ENCODE measurements at regions of chr4 and their contacts with region 1.

Region 1: DNA sequence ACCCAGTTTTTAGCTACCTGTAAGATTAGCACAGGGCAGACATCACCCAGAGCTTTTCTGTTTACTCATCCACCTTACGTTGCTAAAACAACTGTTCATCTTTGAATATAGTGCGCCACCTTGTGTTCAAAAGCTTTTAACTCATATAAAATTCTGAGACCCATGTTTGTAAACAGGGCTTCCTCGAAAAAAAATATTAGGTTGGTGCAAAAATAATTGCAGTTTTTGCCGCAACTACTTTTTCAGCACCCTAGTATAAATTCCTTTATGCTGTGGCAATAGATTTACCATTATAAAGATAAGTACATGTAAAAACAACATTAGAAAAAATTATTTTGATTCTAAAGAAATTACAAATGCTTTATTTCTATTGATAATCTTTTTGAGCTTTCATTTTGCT is 147.9 kb downstream of the LRBA start:
- DNase-seq: no peak
- H3K4me3 ChIP-seq: no peak overlapping the region
- H3K27ac ChIP-seq: no peak overlapping the region
- H3K4me1 ChIP-seq: no peaks in the 10 kb centered on the region
- H3K27me3 ChIP-seq: no peaks in the 10 kb centered on the region
- CTCF ChIP-seq: peak; percentile 49 to 73 (median 60)

Region 2: DNA sequence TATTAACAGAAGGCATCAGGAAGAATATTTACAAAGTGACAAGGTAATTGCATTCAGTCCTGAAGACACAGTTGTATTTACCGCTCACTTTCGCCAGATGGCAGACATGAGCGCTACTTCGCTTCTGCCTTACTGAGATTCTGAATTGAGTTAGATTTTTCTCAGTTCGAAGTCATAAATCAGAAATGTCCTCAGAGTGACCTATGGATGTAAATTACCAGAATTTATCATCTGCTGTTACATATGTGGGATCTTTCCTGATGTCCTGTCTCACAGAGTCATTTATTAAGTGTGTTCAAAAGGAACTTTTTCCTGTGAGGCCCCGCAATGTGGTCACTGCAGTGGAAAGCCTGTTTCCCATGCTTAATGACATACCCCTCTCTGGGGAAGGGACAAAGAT is 886.2 kb before region 1 on chr4:
- intact Hi-C with region 1: loop called (anchors 5 kb)
- DNase-seq: no peak
- H3K4me3 ChIP-seq: no peak overlapping the region
- H3K27ac ChIP-seq: no peak overlapping the region
- H3K4me1 ChIP-seq: no peaks in the 10 kb centered on the region
- H3K27me3 ChIP-seq: no peaks in the 10 kb centered on the region
- CTCF ChIP-seq: peak; percentile 41 to 77 (median 67)

Region 3: DNA sequence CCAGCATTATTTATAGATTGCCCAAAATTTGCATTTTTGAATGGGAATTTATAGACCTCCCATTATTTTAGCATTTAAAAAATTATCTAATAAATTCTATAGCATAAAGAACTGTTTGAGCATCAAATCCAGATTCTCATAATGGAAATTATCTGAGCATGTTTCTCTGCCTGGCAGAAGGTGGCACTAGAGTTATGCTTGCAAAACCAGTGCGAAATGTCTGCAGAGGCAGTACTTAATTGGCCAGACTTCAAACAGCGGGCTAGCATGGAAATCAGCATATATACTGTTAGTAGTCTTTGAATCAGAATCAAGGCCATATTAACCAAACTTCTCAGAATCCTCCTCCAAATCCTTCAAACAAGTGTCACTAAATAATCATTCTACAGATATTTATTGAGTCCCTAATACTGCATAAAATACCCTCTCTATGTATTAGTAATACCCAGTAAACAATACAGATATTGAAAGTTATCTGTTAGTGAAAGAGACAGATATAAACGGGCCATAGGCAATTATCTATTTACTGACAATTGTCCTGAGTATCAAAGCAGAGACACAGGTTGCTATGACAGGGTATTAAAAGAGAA is 867.6 kb before region 1 on chr4:
- intact Hi-C with region 1: loop called (anchors 1 kb)
- DNase-seq: no peak
- H3K4me3 ChIP-seq: no peak overlapping the region
- H3K27ac ChIP-seq: no peak overlapping the region
- H3K4me1 ChIP-seq: peaks cover 0 to 13% of the 10 kb centered on the region in 2 donors
- H3K27me3 ChIP-seq: no peaks in the 10 kb centered on the region
- CTCF ChIP-seq: peak; percentile 58 to 85 (median 73)

Region 4: DNA sequence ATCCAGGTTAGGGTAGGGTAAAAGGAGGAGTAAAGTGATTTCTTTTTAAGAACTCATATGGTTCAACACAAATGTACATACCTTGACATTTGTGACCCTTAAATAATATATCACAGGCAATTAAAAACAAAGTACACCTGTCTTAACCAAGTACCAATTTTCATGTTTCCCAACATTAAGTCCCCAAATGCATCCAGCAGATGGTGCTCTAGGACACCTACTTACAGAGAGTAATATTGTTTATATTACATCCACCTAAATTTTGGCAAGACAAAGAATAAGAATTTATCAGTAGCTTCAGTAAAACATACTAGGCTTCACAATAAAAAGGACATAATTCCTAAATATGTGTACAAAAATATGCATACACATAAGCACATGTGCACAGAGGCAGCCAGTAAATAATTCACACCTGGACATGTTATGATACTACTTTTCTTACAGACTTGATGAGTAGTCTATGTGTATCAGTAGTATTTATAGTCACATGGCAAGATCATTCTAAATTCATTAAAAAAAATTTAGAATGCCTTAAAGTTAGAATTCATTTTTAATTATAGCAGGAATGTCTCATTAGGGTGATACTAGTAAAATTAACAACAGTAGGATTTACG is 569.2 kb before region 1 on chr4:
- intact Hi-C with region 1: loop called (anchors 1 kb)
- DNase-seq: no peak
- H3K4me3 ChIP-seq: no peak overlapping the region
- H3K27ac ChIP-seq: no peak overlapping the region
- H3K4me1 ChIP-seq: no peaks in the 10 kb centered on the region
- H3K27me3 ChIP-seq: no peaks in the 10 kb centered on the region
- CTCF ChIP-seq: peak; percentile 19 to 70 (median 47)

Region 5: GRCh38 chr4:150593996-150594395 is 273.2 kb before region 1 on chr4:
- intact Hi-C with region 1: loop called (anchors 10 kb)
- DNase-seq: no peak
- H3K4me3 ChIP-seq: no peak overlapping the region
- H3K27ac ChIP-seq: no peak overlapping the region
- H3K4me1 ChIP-seq: no peaks in the 10 kb centered on the region
- H3K27me3 ChIP-seq: no peaks in the 10 kb centered on the region
- CTCF ChIP-seq: peak in 1 of 3 experiments; percentile 21

Region 6: GRCh38 chr4:150722908-150723362 is 144.2 kb before region 1 on chr4:
- intact Hi-C with region 1: loop called (anchors 1 kb)
- DNase-seq: peak; percentile 74 to 91
- H3K4me3 ChIP-seq: no peak overlapping the region
- H3K27ac ChIP-seq: peak overlapping the region; percentile 46 to 71
- H3K4me1 ChIP-seq: peaks cover 0 to 10% of the 10 kb centered on the region in 2 donors
- H3K27me3 ChIP-seq: no peaks in the 10 kb centered on the region
- CTCF ChIP-seq: peak; percentile 28 to 57 (median 36)

Region 7: GRCh38 chr4:150886599-150886998 is 19.5 kb after region 1 on chr4:
- intact Hi-C with region 1: no loop called
- DNase-seq: no peak
- H3K4me3 ChIP-seq: no peak overlapping the region
- H3K27ac ChIP-seq: no peak overlapping the region
- H3K4me1 ChIP-seq: no peaks in the 10 kb centered on the region
- H3K27me3 ChIP-seq: no peaks in the 10 kb centered on the region
- CTCF ChIP-seq: no peak

Measured in ascending aorta (tissue), 2 donors.